ENCODE measurements at regions of chr14 and their contacts with region 1.

Region 1: GRCh38 chr14:49933704-49934103 is 40.8 kb downstream of the ARF6 start:
- DNase-seq: no peak
- ATAC-seq: no peak
- H3K4me3 ChIP-seq: no peak overlapping the region
- H3K27ac ChIP-seq: no peak overlapping the region
- H3K4me1 ChIP-seq: no peaks in the 10 kb centered on the region
- H3K27me3 ChIP-seq: no peaks in the 10 kb centered on the region
- CTCF ChIP-seq: no peak
- POLR2A ChIP-seq: no peak

Region 2: GRCh38 chr14:49962621-49963020 is 28.9 kb after region 1 on chr14:
- in situ Hi-C with region 1: no loop called
- intact Hi-C with region 1: loop called (anchors 1 kb)
- DNase-seq: no peak
- ATAC-seq: no peak
- H3K4me3 ChIP-seq: no peak overlapping the region
- H3K27ac ChIP-seq: no peak overlapping the region
- H3K4me1 ChIP-seq: no peaks in the 10 kb centered on the region
- H3K27me3 ChIP-seq: no peaks in the 10 kb centered on the region
- CTCF ChIP-seq: no peak
- POLR2A ChIP-seq: no peak

Measured in gastrocnemius medialis (tissue), 4 donors.